Endothelial cell of umbilical vein (primary cell): ENCODE measurements at regions of chr1 and their contacts with region 1.

Region 1: GRCh38 chr1:244163861-244164562 is 112.9 kb downstream of the ZBTB18 start:
- DNase-seq: peak; percentile 95
- H3K4me3 ChIP-seq: peak overlapping the region in 1 of 3 experiments; percentile 18
- H3K27ac ChIP-seq: peak overlapping the region; percentile 99
- H3K4me1 ChIP-seq: peaks cover 32% of the 10 kb centered on the region
- H3K27me3 ChIP-seq: no peaks in the 10 kb centered on the region
- CTCF ChIP-seq: no peak
- POLR2A ChIP-seq: peak; percentile 52

Region 2: DNA sequence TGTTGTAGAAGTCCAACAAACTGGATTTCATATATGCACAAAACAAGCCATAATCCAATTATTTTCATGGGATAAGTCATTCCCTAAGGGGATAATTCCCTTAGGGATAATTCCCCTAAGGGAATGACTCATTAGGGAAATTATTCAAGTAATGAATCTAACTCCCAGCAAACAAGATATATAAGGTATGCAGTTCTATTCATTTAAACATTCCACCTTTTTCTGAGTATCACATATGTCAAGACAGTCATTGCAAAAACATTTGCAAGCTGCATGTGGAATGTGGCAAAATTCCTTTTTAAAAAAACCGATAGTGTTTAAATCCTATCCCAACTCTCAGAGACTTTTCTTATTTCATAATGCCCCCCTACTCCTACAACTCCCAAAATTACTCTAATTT is 445.1 kb before region 1 on chr1:
- CTCF ChIA-PET with region 1: interaction called, 3 read pairs
- POLR2A ChIA-PET with region 1: no interaction called
- dilution Hi-C with region 1: no loop called
- intact Hi-C with region 1: loop called (anchors 5 kb)
- DNase-seq: peak; percentile 62
- H3K4me3 ChIP-seq: no peak overlapping the region
- H3K27ac ChIP-seq: peak overlapping the region; percentile 63
- H3K4me1 ChIP-seq: peaks cover 18% of the 10 kb centered on the region
- H3K27me3 ChIP-seq: no peaks in the 10 kb centered on the region
- CTCF ChIP-seq: no peak
- POLR2A ChIP-seq: no peak

Region 3: DNA sequence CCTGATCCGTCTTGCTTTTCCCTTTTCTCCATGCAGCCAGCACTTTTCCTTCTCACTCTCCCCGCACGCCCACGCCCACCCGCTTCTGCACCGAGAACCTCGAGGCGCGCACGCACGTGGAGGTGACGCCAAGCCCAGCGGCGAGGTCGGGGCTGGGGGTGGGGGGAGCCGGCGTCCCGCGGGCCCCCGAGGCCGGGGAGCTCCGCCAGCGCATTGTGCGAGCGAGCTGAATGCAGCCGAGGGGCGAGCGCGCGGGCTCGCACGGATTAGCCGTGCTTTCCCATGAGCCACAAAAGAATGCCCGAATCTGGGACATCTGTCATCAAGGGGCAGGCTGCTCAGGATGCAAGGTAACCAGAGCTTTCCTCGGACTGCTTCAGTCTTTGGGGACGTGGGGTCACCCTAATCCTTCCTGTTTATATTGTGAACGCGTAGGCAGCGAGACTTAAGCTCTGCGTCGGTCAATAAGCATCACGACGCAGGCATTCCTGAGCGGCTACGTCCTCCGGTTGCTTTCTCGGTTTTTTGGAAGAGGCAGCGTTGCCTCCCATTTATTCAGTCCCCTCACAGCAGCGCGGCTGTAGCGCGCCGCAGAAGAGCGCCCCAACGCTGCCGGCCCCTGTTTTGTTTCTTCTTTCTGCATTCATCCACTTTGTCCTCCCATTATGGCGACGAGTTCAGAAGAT is 246.7 kb before region 1 on chr1:
- CTCF ChIA-PET with region 1: no interaction called
- POLR2A ChIA-PET with region 1: no interaction called
- dilution Hi-C with region 1: no loop called
- intact Hi-C with region 1: loop called (anchors 2 kb)
- DNase-seq: peak; percentile 79
- H3K4me3 ChIP-seq: peak overlapping the region; percentile 0 to 42 (median 17)
- H3K27ac ChIP-seq: peak overlapping the region; percentile 82
- H3K4me1 ChIP-seq: peaks cover 18% of the 10 kb centered on the region
- H3K27me3 ChIP-seq: no peaks in the 10 kb centered on the region
- CTCF ChIP-seq: no peak
- POLR2A ChIP-seq: no peak

Region 4: GRCh38 chr1:244137725-244138124 is 26.3 kb before region 1 on chr1:
- CTCF ChIA-PET with region 1: interaction called, 3 read pairs
- POLR2A ChIA-PET with region 1: no interaction called
- dilution Hi-C with region 1: no loop called
- intact Hi-C with region 1: loop called (anchors 1 kb)
- DNase-seq: no peak
- H3K4me3 ChIP-seq: no peak overlapping the region
- H3K27ac ChIP-seq: peak overlapping the region; percentile 75
- H3K4me1 ChIP-seq: peaks cover 26% of the 10 kb centered on the region
- H3K27me3 ChIP-seq: no peaks in the 10 kb centered on the region
- CTCF ChIP-seq: no peak
- POLR2A ChIP-seq: no peak

Region 5: DNA sequence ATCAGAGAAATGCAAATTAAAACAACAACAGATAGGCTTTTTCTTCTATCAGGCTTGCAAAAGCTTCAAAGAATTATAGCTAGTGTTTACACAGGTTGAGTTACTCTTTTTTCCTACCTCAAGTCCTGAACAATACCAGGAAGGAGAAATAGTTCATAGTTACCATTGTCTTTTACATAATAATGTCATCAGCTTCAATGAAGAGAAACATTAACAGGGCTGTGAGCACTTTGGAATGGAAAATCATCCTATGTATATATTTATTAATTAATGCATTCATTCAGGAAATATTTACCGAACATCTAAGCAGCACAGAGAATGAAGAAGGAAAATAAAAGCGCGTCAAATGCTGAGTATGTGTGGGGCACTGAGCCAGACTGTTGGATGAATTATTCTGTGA is 84.4 kb after region 1 on chr1:
- CTCF ChIA-PET with region 1: no interaction called
- POLR2A ChIA-PET with region 1: no interaction called
- dilution Hi-C with region 1: no loop called
- intact Hi-C with region 1: loop called (anchors 1 kb)
- DNase-seq: peak; percentile 87
- H3K4me3 ChIP-seq: no peak overlapping the region
- H3K27ac ChIP-seq: peak overlapping the region; percentile 34
- H3K4me1 ChIP-seq: peaks cover 12% of the 10 kb centered on the region
- H3K27me3 ChIP-seq: no peaks in the 10 kb centered on the region
- CTCF ChIP-seq: no peak
- POLR2A ChIP-seq: no peak

Region 6: DNA sequence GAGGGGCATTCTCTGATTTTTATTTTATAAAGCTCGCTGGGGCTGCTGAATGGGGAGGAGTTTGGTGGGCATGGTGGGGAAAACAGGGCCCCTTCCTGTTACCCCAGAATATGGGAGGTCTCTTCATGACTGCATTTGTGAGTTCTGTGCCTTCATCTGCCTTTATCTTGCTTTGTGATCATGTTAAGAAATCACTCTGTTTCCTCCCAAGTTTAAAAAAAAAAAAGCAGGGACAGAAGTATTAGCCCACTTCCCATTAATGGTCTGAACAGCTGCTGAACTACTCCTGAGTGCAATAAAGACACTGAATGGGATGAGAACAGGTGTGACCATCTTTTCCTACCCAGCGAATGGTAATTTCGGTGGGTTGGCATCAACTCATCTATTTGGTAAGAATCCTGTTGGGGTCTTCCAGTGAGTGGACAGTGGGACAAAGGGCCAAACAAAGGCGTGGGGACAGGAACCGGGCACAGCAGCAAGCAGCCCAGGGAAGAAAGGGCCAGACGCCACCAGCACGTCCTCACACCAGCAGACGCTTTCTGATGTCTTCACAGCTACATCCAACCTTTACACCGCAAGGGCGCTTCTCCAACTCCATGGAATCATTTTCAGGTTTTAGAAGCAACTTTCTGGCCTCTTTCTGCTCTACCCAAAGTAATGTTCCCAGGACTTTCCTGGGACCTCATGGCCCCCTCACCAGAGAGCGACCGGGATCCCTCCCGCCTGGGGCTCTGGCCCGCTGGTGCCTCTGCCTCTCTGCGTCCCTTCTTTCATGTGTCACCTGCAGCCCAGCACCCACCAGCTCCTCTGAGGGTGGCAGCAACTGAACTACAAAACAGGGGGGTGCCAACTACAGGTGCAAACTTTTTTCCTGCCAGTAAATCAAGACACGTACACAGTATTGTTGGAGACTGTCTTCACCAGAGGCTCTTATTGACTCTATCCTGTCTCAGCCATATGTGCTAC is 127.5 kb after region 1 on chr1:
- CTCF ChIA-PET with region 1: no interaction called
- POLR2A ChIA-PET with region 1: no interaction called
- dilution Hi-C with region 1: no loop called
- intact Hi-C with region 1: no loop called
- DNase-seq: no peak
- H3K4me3 ChIP-seq: no peak overlapping the region
- H3K27ac ChIP-seq: no peak overlapping the region
- H3K4me1 ChIP-seq: peaks cover 4% of the 10 kb centered on the region
- H3K27me3 ChIP-seq: no peaks in the 10 kb centered on the region
- CTCF ChIP-seq: no peak
- POLR2A ChIP-seq: no peak

Region 7: DNA sequence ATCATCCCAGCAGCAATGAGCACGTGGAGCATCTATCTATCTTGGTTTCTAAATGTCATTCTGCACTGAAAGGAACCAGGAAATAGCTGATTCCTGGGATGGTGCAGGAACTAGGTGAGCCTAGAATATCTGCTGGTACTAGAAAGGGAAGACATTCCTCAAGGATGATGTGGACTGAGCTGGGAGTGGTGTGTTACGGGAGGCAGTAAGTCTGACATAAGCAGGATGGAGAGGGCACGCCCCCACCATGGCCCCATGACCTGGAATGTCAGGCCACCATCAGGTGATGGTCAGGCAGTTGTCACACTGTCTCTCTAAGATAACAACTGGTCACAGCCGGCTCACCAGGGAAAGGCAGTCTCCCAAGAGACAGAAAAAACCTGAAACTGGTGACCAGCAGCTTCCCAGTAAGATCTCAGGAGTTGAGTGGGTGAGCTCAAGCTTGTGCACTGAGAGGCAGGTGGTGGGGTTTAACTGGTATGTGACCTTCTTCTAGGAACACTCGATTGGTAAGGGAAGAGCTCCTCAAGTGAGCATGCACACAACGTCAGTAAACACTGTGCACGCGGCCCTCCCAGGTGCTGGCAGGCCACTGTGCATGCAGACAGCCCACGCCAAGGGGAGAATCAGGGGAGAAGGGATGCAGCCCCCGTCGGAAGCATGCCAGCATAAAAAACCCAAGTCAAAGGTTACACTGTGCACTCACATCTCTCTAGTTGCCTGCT is 139.0 kb after region 1 on chr1:
- CTCF ChIA-PET with region 1: no interaction called
- POLR2A ChIA-PET with region 1: no interaction called
- dilution Hi-C with region 1: no loop called
- intact Hi-C with region 1: no loop called
- DNase-seq: peak; percentile 53
- H3K4me3 ChIP-seq: no peak overlapping the region
- H3K27ac ChIP-seq: peak overlapping the region; percentile 13
- H3K4me1 ChIP-seq: peaks cover 52% of the 10 kb centered on the region
- H3K27me3 ChIP-seq: no peaks in the 10 kb centered on the region
- CTCF ChIP-seq: no peak
- POLR2A ChIP-seq: no peak